ENCODE measurements at regions of chr15 and their contacts with region 1.

Region 1: DNA sequence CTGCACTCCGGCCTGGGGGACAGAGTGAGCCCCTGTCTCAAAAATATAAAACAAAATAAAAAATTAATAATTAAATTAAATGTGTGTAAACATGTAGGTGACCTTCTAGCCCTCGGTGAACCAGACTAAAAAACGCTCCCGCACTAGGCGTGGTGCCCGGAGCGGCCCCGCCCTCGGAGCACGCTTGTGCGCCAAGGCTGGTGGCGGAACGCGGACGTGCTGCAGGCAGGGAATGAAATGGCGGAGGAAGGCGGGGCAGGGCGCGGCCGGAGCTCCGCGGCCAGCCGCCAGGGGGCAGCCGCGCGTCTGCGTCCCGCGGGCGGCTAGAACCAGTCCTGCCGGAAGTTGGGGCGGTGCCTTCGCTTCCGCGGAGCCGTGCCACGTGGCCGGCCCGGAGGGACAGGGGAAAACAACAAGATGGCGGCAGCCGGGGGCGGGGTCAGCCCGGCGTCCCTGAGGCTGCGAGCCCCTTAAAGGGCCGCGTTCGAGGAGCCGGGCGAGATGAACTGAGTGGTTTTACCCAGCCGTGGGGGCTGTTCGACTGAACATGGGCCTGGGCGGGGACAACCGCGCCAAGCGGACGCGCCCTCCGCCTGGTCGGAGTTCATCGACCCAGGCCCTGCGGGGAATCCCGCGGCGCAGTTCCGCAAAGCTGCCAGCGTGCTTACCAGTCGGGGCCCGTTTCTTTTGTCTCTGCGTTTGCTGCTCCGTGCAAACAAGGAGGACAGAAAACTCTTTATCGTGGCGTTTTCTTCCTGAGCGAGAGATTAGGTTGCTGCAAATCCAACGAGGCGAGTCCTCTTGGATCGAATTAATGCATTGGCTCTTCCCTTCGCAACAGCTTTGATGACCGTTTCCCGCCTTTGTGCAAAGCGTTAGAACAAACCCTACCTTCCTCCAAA is 90.9 kb upstream of the CHD2 start:
- DNase-seq: peak; percentile 100
- H3K4me3 Mint-ChIP-seq: peak overlapping the region; percentile 94
- H3K27ac Mint-ChIP-seq: peak overlapping the region; percentile 98
- H3K4me1 Mint-ChIP-seq: peaks cover 60% of the 10 kb centered on the region
- H3K27me3 Mint-ChIP-seq: no peaks in the 10 kb centered on the region

Region 2: GRCh38 chr15:92820236-92821021 is 11.2 kb after region 1 on chr15:
- intact Hi-C with region 1: loop called (anchors 1 kb)
- DNase-seq: peak; percentile 86
- H3K4me3 Mint-ChIP-seq: peak overlapping the region; percentile 86
- H3K27ac Mint-ChIP-seq: peak overlapping the region; percentile 96
- H3K4me1 Mint-ChIP-seq: peaks cover 58% of the 10 kb centered on the region
- H3K27me3 Mint-ChIP-seq: no peaks in the 10 kb centered on the region

Region 3: DNA sequence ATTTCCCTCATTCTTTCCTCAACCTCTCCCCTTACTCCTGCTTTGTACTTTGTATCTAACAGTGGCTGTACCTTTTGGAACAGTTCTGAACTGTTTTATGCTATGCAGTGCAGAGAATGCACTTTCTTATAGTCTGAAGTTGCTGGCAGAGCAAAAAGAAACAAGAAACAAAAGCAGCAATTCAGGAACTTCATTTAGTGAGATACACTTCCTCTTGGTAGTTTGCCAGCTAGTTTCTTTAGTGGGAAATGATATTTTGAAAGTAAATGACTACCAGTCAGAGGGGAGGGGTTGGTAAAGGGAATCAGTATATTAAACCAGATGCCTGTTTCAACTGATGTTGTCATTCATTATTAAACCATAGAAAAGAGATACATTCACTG is 35.9 kb after region 1 on chr15:
- intact Hi-C with region 1: loop called (anchors 1 kb)
- DNase-seq: no peak
- H3K4me3 Mint-ChIP-seq: peak overlapping the region; percentile 77
- H3K27ac Mint-ChIP-seq: peak overlapping the region; percentile 96
- H3K4me1 Mint-ChIP-seq: peaks cover 68% of the 10 kb centered on the region
- H3K27me3 Mint-ChIP-seq: no peaks in the 10 kb centered on the region

Region 4: DNA sequence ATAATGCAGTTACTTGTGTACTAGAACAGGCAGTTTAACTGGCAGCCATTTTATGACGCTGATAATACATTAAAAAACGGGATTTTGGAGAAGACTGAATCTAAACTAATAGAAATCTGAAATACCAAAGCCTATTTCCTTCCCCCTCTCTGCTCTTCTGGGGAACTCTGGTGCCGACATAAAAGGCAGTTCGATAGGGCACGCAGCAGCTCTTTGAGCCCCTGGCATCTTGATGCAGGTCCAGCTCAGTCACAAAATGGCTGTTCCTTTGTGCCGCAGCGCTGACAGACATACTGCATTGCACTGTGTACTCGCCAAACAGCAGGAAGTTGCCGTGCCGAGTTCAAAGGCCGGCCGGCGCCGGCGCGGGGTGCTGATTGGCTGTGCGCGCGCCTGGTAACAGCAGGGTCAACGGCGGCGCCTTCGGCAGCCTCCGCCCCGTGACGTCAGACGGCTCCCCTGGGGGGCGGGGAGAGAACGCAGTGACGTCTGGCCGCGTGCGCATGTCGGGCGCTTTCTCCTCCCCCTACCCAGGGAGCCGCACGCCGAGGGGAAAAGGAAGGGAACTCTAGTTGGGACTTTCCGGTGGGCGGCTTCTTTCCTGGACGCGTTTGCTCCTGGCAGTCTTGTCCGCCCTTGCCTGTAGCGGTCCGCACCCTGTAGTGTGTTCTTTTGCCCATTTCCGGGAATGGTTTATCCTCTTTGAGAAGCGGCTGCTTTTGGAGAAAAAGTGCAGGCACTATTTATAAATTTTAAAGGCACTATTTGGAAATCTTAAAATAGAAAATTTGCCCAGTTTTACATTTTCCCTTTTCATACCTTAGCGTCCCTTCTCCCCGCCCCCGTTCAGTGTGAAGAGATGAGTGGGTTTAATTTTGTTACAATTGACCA is 95.0 kb after region 1 on chr15:
- intact Hi-C with region 1: loop called (anchors 1 kb)
- DNase-seq: peak; percentile 99
- H3K4me3 Mint-ChIP-seq: peak overlapping the region; percentile 93
- H3K27ac Mint-ChIP-seq: peak overlapping the region; percentile 100
- H3K4me1 Mint-ChIP-seq: peaks cover 67% of the 10 kb centered on the region
- H3K27me3 Mint-ChIP-seq: no peaks in the 10 kb centered on the region

Region 5: GRCh38 chr15:93152951-93153350 is 343.7 kb after region 1 on chr15:
- intact Hi-C with region 1: no loop called
- DNase-seq: no peak
- H3K4me3 Mint-ChIP-seq: peak overlapping the region; percentile 48
- H3K27ac Mint-ChIP-seq: no peak overlapping the region
- H3K4me1 Mint-ChIP-seq: peaks cover 15% of the 10 kb centered on the region
- H3K27me3 Mint-ChIP-seq: peaks cover 17% of the 10 kb centered on the region

Measured in activated T-helper 1 cell treated with anti-CD3 and anti-CD28 coated beads, Interleukin-12 subunit alpha, Interleukin-12 subunit beta, Interleukin-2, Interleukin-4 antibody, amounts not matched to agents 30 ng/mL and 10 ng/mL and 1 ng/mL, durations not matched to agents 14 hours and 24 hours and 36 hours (primary cell).